A673 (cell line): ENCODE measurements at regions of chr9 and their contacts with region 1.

Region 1: GRCh38 chr9:77456829-77457437 is 191.2 kb downstream of the GNA14 start:
- DNase-seq: peak; percentile 95
- H3K4me3 ChIP-seq: no peak overlapping the region
- H3K27ac ChIP-seq: peak overlapping the region; percentile 70
- H3K4me1 ChIP-seq: peaks cover 20% of the 10 kb centered on the region
- H3K27me3 ChIP-seq: no peaks in the 10 kb centered on the region
- CTCF ChIP-seq: peak; percentile 94

Region 2: DNA sequence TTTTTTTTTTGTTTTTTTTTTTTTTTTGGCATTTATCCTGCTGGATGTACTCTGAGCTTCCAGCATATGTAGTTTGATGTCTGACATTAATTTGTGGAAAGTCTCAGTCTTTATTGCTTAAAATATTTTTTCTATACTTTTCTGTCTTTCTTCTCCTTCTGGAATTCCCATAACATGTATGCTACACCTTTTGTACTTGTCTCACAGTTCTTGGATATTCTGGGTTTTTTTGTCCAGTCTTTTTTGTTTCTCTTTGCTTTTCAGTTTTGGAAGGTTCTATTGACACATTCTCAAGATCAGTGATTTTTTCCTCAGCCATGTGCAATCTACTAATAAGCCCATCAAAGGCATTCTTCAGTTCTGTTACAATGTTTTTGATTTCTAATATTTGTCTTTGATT is 1043.3 kb before region 1 on chr9:
- CTCF ChIA-PET with region 1: interaction called, 15 read pairs
- POLR2A ChIA-PET with region 1: no interaction called
- intact Hi-C with region 1: no loop called
- DNase-seq: no peak
- H3K4me3 ChIP-seq: no peak overlapping the region
- H3K27ac ChIP-seq: no peak overlapping the region
- H3K4me1 ChIP-seq: no peaks in the 10 kb centered on the region
- H3K27me3 ChIP-seq: no peaks in the 10 kb centered on the region
- CTCF ChIP-seq: no peak

Region 3: GRCh38 chr9:77291714-77292113 is 165.2 kb before region 1 on chr9:
- CTCF ChIA-PET with region 1: no interaction called
- POLR2A ChIA-PET with region 1: no interaction called
- intact Hi-C with region 1: loop called (anchors 2 kb)
- DNase-seq: peak; percentile 75
- H3K4me3 ChIP-seq: no peak overlapping the region
- H3K27ac ChIP-seq: no peak overlapping the region
- H3K4me1 ChIP-seq: no peaks in the 10 kb centered on the region
- H3K27me3 ChIP-seq: no peaks in the 10 kb centered on the region
- CTCF ChIP-seq: peak; percentile 71

Region 4: DNA sequence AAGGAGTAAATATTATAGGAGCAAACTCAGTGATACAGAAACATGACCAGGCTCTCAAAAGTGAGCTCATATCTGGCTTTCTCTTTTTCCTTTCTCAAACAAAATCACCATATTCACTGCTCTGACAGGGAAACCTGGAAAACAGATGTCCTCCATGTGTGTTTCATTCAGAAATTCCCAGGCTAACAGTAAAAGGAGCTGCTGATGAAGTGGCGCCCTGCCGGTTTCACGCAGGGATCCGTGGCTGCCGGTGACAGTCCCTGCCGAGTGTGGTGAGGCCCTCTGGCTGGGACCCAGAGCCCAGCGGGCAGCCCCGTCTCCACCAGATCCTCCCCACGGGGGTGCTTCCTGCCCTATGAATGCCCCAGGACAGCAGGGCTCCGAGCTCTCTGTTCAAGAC is 16.9 kb before region 1 on chr9:
- CTCF ChIA-PET with region 1: interaction called, 11 read pairs
- POLR2A ChIA-PET with region 1: interaction called, 4 read pairs
- intact Hi-C with region 1: no loop called
- DNase-seq: peak; percentile 99
- H3K4me3 ChIP-seq: peak overlapping the region; percentile 10
- H3K27ac ChIP-seq: peak overlapping the region; percentile 95
- H3K4me1 ChIP-seq: peaks cover 55% of the 10 kb centered on the region
- H3K27me3 ChIP-seq: no peaks in the 10 kb centered on the region
- CTCF ChIP-seq: no peak

Region 5: DNA sequence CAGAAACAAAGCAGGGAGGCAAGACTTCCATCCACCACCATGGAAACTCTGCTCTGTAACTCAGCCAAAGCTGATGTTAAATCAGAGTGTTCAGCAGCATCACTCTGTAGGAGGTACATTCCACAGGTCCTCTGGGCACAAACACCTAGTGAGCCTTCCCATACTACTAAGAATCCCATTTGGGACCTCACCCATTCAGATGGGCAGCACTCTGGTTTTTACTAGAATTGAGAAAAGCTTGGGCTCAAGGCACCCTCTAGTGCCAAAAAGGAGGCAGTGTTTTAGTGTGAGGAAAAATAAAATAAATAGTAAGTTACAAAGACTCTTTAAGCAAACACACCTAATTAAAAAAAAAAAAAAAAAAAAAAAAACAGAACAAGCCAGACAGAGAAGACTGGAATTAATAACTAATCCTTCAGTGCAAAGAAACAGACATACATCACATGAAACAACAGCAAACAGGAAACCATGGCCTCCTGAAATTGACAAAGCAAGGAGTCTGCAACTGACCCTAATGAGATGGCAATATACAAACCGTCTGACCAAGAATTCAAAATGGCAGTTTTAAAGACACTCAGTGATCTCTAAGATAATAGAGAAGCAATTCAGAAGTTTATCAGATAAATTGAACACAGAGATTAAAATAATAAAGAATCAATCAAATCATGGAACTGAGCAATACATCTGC is 31.6 kb after region 1 on chr9:
- CTCF ChIA-PET with region 1: interaction called, 4 read pairs
- POLR2A ChIA-PET with region 1: no interaction called
- intact Hi-C with region 1: loop called (anchors 2 kb)
- DNase-seq: peak; percentile 75
- H3K4me3 ChIP-seq: no peak overlapping the region
- H3K27ac ChIP-seq: no peak overlapping the region
- H3K4me1 ChIP-seq: no peaks in the 10 kb centered on the region
- H3K27me3 ChIP-seq: no peaks in the 10 kb centered on the region
- CTCF ChIP-seq: peak; percentile 74

Region 6: GRCh38 chr9:77640741-77641580 is 184.0 kb after region 1 on chr9:
- CTCF ChIA-PET with region 1: interaction called, 11 read pairs
- POLR2A ChIA-PET with region 1: no interaction called
- intact Hi-C with region 1: loop called (anchors 5 kb)
- DNase-seq: peak; percentile 96
- H3K4me3 ChIP-seq: no peak overlapping the region
- H3K27ac ChIP-seq: peak overlapping the region; percentile 99
- H3K4me1 ChIP-seq: peaks cover 63% of the 10 kb centered on the region
- H3K27me3 ChIP-seq: no peaks in the 10 kb centered on the region
- CTCF ChIP-seq: no peak